Activated naive CD4-positive, alpha-beta T cell treated with anti-CD3 and anti-CD28 coated beads for 36 hours (primary cell): ENCODE measurements at regions of chr3 and their contacts with region 1.

Region 1: GRCh38 chr3:141231101-141231935 is at the start of gene PXYLP1:
- DNase-seq: peak; percentile 92
- H3K4me3 Mint-ChIP-seq: peak within 1 kb of the TSS; percentile 97
- H3K27ac Mint-ChIP-seq: peak within 1 kb of the TSS; percentile 95
- H3K4me1 Mint-ChIP-seq: peaks cover 34% of the 10 kb centered on the region
- H3K27me3 Mint-ChIP-seq: no peaks in the 10 kb centered on the region
- total RNA-seq, gene PXYLP1: 8.4 to 9.7 TPM

Region 2: GRCh38 chr3:141164852-141165251 is 66.5 kb before region 1 on chr3:
- CTCF ChIA-PET with region 1: no interaction called
- intact Hi-C with region 1: no loop called
- DNase-seq: no peak
- H3K4me3 Mint-ChIP-seq: no peak overlapping the region
- H3K27ac Mint-ChIP-seq: no peak overlapping the region
- H3K4me1 Mint-ChIP-seq: no peaks in the 10 kb centered on the region
- H3K27me3 Mint-ChIP-seq: peaks cover 4% of the 10 kb centered on the region

Region 3: GRCh38 chr3:141243271-141243707 is 12.0 kb after region 1 on chr3:
- CTCF ChIA-PET with region 1: interaction called, 62 read pairs
- intact Hi-C with region 1: loop called (anchors 1 kb)
- DNase-seq: peak; percentile 86
- H3K4me3 Mint-ChIP-seq: peak overlapping the region; percentile 61
- H3K27ac Mint-ChIP-seq: peak overlapping the region; percentile 59
- H3K4me1 Mint-ChIP-seq: peaks cover 45% of the 10 kb centered on the region
- H3K27me3 Mint-ChIP-seq: no peaks in the 10 kb centered on the region

Region 4: DNA sequence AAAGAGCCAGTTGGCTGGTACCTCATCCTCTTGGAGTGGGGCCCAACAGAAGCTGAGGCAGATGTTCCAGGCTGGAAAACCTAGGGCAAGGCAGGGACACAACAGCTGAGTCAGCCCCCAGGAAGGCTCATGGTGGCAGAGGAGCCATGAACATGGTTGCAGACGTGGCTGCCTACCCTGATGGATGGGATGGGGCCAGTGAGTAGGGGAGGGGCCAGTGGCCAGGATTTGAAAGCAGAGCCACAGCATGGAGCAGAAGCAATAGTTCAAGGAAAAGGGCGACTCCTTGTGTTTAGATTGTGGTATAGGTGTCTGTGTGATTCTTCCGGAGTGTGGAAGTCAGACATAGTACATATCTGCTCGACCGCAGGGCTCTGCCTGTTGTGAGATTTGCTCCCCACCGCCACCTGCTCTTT is 24.5 kb after region 1 on chr3:
- CTCF ChIA-PET with region 1: interaction called, 62 read pairs
- intact Hi-C with region 1: loop called (anchors 1 kb)
- DNase-seq: peak; percentile 68
- H3K4me3 Mint-ChIP-seq: peak overlapping the region; percentile 3
- H3K27ac Mint-ChIP-seq: no peak overlapping the region
- H3K4me1 Mint-ChIP-seq: peaks cover 25% of the 10 kb centered on the region
- H3K27me3 Mint-ChIP-seq: no peaks in the 10 kb centered on the region

Region 5: GRCh38 chr3:141279077-141279967 is 48.0 kb after region 1 on chr3:
- CTCF ChIA-PET with region 1: interaction called, 35 read pairs
- intact Hi-C with region 1: loop called (anchors 1 kb)
- DNase-seq: peak; percentile 34
- H3K4me3 Mint-ChIP-seq: no peak overlapping the region
- H3K27ac Mint-ChIP-seq: no peak overlapping the region
- H3K4me1 Mint-ChIP-seq: peaks cover 17% of the 10 kb centered on the region
- H3K27me3 Mint-ChIP-seq: no peaks in the 10 kb centered on the region

Region 6: DNA sequence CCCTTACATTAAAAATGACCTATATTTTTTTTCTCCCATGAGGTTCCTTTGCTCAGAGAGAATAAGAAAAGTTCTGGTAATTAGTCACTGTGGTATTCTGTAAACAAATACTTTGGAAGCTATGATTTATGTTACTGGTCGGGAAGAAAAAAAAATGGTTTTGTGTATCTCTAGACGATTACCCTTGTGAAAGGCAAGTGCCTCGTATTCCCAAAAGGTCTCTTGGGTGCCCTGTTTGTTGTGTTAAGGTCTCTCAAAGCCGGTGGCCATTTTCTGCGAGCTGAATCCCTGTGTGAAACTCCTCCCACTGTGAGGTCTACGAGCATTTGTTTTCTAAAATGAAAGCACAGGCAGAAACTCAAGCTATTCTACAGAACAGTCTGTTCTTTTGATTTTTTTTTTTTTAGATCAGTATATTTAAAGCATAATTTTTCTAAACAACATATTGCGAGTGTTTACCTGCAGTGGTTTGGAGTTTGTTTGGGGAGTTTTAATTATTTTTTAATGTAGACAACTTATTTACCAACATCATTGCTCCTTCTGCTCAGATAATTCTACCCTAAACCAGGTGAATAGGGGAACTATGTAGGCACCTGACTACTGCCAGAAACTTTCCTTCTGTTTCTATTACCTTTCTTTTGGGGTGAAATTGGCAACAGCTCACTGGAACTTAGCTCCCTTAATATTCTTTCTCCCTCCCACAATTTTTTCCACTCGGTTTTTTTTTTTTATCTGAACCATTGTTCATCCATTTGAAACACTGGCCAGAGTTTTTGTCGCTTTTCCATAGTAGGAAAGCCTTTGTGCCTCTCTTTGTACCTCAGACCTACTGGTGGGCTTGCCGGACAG is 181.0 kb after region 1 on chr3:
- CTCF ChIA-PET with region 1: no interaction called
- intact Hi-C with region 1: loop called (anchors 2 kb)
- DNase-seq: peak; percentile 73
- H3K4me3 Mint-ChIP-seq: peak overlapping the region; percentile 72
- H3K27ac Mint-ChIP-seq: peak overlapping the region; percentile 97
- H3K4me1 Mint-ChIP-seq: peaks cover 72% of the 10 kb centered on the region
- H3K27me3 Mint-ChIP-seq: no peaks in the 10 kb centered on the region

Region 7: GRCh38 chr3:141561426-141562034 is 330.2 kb after region 1 on chr3:
- CTCF ChIA-PET with region 1: no interaction called
- intact Hi-C with region 1: loop called (anchors 5 kb)
- DNase-seq: peak; percentile 61
- H3K4me3 Mint-ChIP-seq: no peak overlapping the region
- H3K27ac Mint-ChIP-seq: no peak overlapping the region
- H3K4me1 Mint-ChIP-seq: peaks cover 33% of the 10 kb centered on the region
- H3K27me3 Mint-ChIP-seq: no peaks in the 10 kb centered on the region

Region 8: GRCh38 chr3:141972399-141972798 is 741.1 kb after region 1 on chr3:
- CTCF ChIA-PET with region 1: no interaction called
- intact Hi-C with region 1: no loop called
- DNase-seq: no peak
- H3K4me3 Mint-ChIP-seq: no peak overlapping the region
- H3K27ac Mint-ChIP-seq: no peak overlapping the region
- H3K4me1 Mint-ChIP-seq: no peaks in the 10 kb centered on the region
- H3K27me3 Mint-ChIP-seq: no peaks in the 10 kb centered on the region